B cell (primary cell): ENCODE measurements at regions of chr17 and their contacts with region 1.

Region 1: GRCh38 chr17:82098072-82098821 is at the start of gene FASN:
- DNase-seq: peak; percentile 97
- ATAC-seq: peak; percentile 76
- H3K4me3 ChIP-seq: peak within 1 kb of the TSS; percentile 11 to 78 (median 64)
- H3K4me3 Mint-ChIP-seq: peak within 1 kb of the TSS; percentile 82
- H3K27ac ChIP-seq: peak within 1 kb of the TSS; percentile 88 to 89
- H3K27ac Mint-ChIP-seq: peak within 1 kb of the TSS; percentile 89
- H3K4me1 ChIP-seq: peaks cover 16 to 28% of the 10 kb centered on the region in 2 donors
- H3K4me1 Mint-ChIP-seq: peaks cover 9% of the 10 kb centered on the region
- H3K27me3 ChIP-seq: no peaks in the 10 kb centered on the region
- H3K27me3 Mint-ChIP-seq: no peaks in the 10 kb centered on the region
- CTCF ChIP-seq: peak; percentile 58
- total RNA-seq, gene FASN: 35.6 and 36.8 TPM in 2 replicates

Region 2: GRCh38 chr17:82037113-82037888 is 60.9 kb before region 1 on chr17 and contains the start of gene DCXR:
- CTCF ChIA-PET with region 1: interaction called, 3 read pairs
- POLR2A ChIA-PET with region 1: interaction called, 9 read pairs
- intact Hi-C with region 1: loop called (anchors 1 kb)
- DNase-seq: peak; percentile 98
- ATAC-seq: peak; percentile 91
- H3K4me3 ChIP-seq: peak within 1 kb of the TSS; percentile 34 to 76 (median 72)
- H3K4me3 Mint-ChIP-seq: peak within 1 kb of the TSS; percentile 90
- H3K27ac ChIP-seq: peak within 1 kb of the TSS; percentile 59 to 84
- H3K27ac Mint-ChIP-seq: peak within 1 kb of the TSS; percentile 99
- H3K4me1 ChIP-seq: peaks cover 18 to 20% of the 10 kb centered on the region in 2 donors
- H3K4me1 Mint-ChIP-seq: peaks cover 24% of the 10 kb centered on the region
- H3K27me3 ChIP-seq: peaks cover 0 to 4% (median 1%) of the 10 kb centered on the region in 4 experiments
- H3K27me3 Mint-ChIP-seq: no peaks in the 10 kb centered on the region
- CTCF ChIP-seq: peak; percentile 87
- total RNA-seq, gene DCXR: 63.9 and 70.7 TPM in 2 replicates

Region 3: DNA sequence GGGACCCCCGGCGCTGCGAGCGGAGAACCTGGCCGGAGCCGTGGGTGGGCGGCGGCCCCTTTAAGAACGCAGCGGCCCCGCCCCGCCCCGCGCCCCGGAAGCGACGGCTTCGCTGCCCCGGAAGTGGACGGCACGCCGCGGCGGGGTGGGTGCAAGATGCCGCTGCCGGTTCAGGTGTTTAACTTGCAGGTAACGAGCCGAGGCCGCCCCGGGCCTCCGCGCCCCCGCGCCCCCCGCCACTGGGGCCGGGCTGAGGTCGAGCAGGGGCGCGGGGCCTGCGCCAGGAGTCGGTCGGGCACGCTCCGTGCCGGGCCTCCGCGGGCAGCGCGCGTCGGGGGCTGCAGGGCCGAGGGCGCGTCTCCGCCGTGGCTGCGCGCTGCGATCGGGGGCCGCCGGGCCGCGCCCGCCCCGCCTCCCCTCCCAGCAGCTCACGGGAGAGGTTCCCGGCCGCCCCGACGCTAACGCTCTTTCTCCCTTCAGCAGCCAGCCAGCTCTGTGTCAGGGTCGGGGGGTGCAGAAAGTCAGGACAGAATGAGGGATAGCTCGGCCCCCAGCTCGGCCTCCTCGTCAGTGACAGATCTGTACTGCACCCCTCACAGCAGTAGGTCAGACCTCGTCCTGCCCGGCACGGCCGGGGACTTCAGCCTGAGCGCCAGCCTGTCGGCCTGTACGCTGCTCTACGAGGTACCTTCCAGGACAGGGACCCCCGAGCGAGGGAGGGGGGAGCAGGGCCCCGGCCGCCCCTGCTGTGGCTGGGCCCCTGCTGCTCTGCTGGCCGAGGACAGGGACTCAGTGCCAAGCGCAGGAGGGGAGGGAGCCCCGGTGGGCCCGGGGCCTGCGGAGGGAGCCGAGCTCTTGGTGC is 46.2 kb before region 1 on chr17 and contains the starts of genes GPS1 and RFNG:
- CTCF ChIA-PET with region 1: no interaction called
- POLR2A ChIA-PET with region 1: interaction called, 5 read pairs
- intact Hi-C with region 1: loop called (anchors 1 kb)
- DNase-seq: peak; percentile 82
- ATAC-seq: peak; percentile 88
- H3K4me3 ChIP-seq: peak within 1 kb of the TSS; percentile 54 to 88 (median 63)
- H3K4me3 Mint-ChIP-seq: peak within 1 kb of the TSS; percentile 84
- H3K27ac ChIP-seq: peak within 1 kb of the TSS in 1 of 2 donors; percentile 30
- H3K27ac Mint-ChIP-seq: peak within 1 kb of the TSS; percentile 86
- H3K4me1 ChIP-seq: peaks cover 20 to 34% of the 10 kb centered on the region in 2 donors
- H3K4me1 Mint-ChIP-seq: peaks cover 14% of the 10 kb centered on the region
- H3K27me3 ChIP-seq: no peaks in the 10 kb centered on the region
- H3K27me3 Mint-ChIP-seq: no peaks in the 10 kb centered on the region
- CTCF ChIP-seq: no peak
- total RNA-seq, gene GPS1: 79.5 and 80.5 TPM in 2 replicates
- total RNA-seq, gene RFNG: 30.1 TPM in 2 replicates

Region 4: GRCh38 chr17:82065638-82066303 is 32.5 kb before region 1 on chr17 and contains the start of gene DUS1L:
- CTCF ChIA-PET with region 1: no interaction called
- POLR2A ChIA-PET with region 1: interaction called, 3 read pairs
- intact Hi-C with region 1: loop called (anchors 1 kb)
- DNase-seq: peak; percentile 84
- ATAC-seq: peak; percentile 89
- H3K4me3 ChIP-seq: peak within 1 kb of the TSS; percentile 18 to 76 (median 74)
- H3K4me3 Mint-ChIP-seq: peak within 1 kb of the TSS; percentile 81
- H3K27ac ChIP-seq: peak within 1 kb of the TSS; percentile 79 to 90
- H3K27ac Mint-ChIP-seq: peak within 1 kb of the TSS; percentile 89
- H3K4me1 ChIP-seq: peaks cover 16 to 26% of the 10 kb centered on the region in 2 donors
- H3K4me1 Mint-ChIP-seq: peaks cover 15% of the 10 kb centered on the region
- H3K27me3 ChIP-seq: no peaks in the 10 kb centered on the region
- H3K27me3 Mint-ChIP-seq: no peaks in the 10 kb centered on the region
- CTCF ChIP-seq: no peak
- total RNA-seq, gene DUS1L: 109 and 112 TPM in 2 replicates

Region 5: GRCh38 chr17:82212331-82213250 is 114.3 kb after region 1 on chr17 and contains the start of gene CCDC57:
- CTCF ChIA-PET with region 1: no interaction called
- POLR2A ChIA-PET with region 1: interaction called, 3 read pairs
- intact Hi-C with region 1: loop called (anchors 10 kb)
- DNase-seq: peak; percentile 88
- ATAC-seq: peak; percentile 66
- H3K4me3 ChIP-seq: peak within 1 kb of the TSS in 4 of 5 experiments; percentile 52 to 79 (median 68)
- H3K4me3 Mint-ChIP-seq: peak within 1 kb of the TSS; percentile 87
- H3K27ac ChIP-seq: peak within 1 kb of the TSS; percentile 22 to 81
- H3K27ac Mint-ChIP-seq: peak within 1 kb of the TSS; percentile 93
- H3K4me1 ChIP-seq: peaks cover 31 to 37% of the 10 kb centered on the region in 2 donors
- H3K4me1 Mint-ChIP-seq: peaks cover 32% of the 10 kb centered on the region
- H3K27me3 ChIP-seq: no peaks in the 10 kb centered on the region
- H3K27me3 Mint-ChIP-seq: no peaks in the 10 kb centered on the region
- CTCF ChIP-seq: no peak
- total RNA-seq, gene CCDC57: 67.2 and 82.0 TPM in 2 replicates

Region 6: DNA sequence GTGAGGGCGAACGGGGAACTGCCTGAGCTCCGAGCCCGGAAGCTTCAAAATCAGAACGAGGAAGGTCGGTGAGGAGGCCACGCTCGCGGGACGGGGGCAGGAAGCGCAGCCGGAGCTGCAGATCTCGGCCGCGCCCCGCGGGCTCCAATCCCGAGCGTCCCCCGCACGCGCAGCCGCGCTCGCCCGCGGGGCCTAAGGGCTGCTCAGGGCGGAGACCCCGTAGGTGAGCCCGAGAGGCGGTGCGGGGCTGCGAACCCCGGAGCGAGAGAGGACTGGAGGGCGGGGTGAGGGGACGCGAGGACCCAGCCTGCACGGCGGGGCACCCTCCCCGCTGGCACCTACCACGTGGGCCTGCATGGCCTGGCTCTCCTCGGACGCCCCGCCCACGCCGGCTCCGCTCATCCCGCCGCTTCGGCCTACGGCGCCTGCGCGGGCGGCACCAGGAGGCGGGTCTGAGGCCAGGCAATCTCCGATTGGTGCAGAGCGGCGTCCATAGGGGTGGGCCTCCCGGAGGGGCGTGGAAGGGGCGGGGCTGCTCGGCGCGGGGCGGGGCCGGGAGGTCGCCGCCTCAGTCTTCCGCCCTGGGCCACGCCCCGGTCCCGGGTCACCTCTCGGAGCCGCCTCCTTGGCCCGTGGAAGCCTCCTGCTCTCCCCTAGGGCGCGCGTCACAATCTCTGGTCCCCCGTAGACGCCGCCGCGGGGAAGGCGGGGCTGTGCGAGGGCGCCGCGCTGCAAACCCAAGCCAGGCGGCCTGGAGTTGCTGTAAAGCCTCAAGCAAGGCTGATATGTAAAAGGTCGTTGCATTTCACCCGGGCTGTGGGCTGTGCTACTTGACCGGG is 953.4 kb after region 1 on chr17:
- CTCF ChIA-PET with region 1: no interaction called
- POLR2A ChIA-PET with region 1: no interaction called
- intact Hi-C with region 1: loop called (anchors 5 kb)
- DNase-seq: peak; percentile 98
- ATAC-seq: peak; percentile 90
- H3K4me3 ChIP-seq: peak overlapping the region in 4 of 5 experiments; percentile 45 to 76 (median 62)
- H3K4me3 Mint-ChIP-seq: peak overlapping the region; percentile 88
- H3K27ac ChIP-seq: peak overlapping the region; percentile 68 to 69
- H3K27ac Mint-ChIP-seq: peak overlapping the region; percentile 91
- H3K4me1 ChIP-seq: peaks cover 11 to 29% of the 10 kb centered on the region in 2 donors
- H3K4me1 Mint-ChIP-seq: peaks cover 30% of the 10 kb centered on the region
- H3K27me3 ChIP-seq: no peaks in the 10 kb centered on the region
- H3K27me3 Mint-ChIP-seq: no peaks in the 10 kb centered on the region
- CTCF ChIP-seq: no peak